Mammary epithelial cell (primary cell): ENCODE measurements at regions of chr7 and their contacts with region 1.

Region 1: GRCh38 chr7:5284304-5285281 is 1.9 kb downstream of the SLC29A4 start:
- DNase-seq: no peak
- H3K4me3 ChIP-seq: no peak overlapping the region
- H3K27ac ChIP-seq: no peak overlapping the region
- H3K4me1 ChIP-seq: no peaks in the 10 kb centered on the region
- H3K27me3 ChIP-seq: no peaks in the 10 kb centered on the region
- CTCF ChIP-seq: peak in 1 of 2 donors; percentile 44

Region 2: DNA sequence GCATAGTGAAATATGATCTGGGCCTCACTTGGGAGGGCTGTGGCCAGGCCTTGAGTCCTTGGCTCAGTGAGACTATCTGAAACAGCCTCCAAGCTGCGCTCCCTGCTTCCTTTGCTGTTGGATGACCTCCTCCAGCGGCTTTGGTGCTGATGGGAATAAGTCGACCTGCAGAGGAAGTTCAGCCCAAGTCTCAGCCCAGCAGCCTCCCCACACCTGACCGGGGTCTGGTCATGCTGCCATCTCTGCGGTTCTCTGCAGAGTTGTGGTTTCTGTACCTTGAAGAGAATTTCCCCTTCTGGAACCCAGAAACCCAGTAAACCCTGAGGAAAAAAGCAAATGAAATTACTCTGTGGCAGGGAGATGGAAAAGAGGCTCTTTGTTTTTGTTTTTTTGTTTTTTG is 243.5 kb before region 1 on chr7:
- CTCF ChIA-PET with region 1: no interaction called
- dilution Hi-C with region 1: no loop called
- in situ Hi-C with region 1: no loop called
- intact Hi-C with region 1: no loop called
- DNase-seq: no peak
- H3K4me3 ChIP-seq: no peak overlapping the region
- H3K27ac ChIP-seq: no peak overlapping the region
- H3K4me1 ChIP-seq: no peaks in the 10 kb centered on the region
- H3K27me3 ChIP-seq: no peaks in the 10 kb centered on the region
- CTCF ChIP-seq: no peak

Region 3: GRCh38 chr7:5117095-5117970 is 167.3 kb before region 1 on chr7:
- CTCF ChIA-PET with region 1: no interaction called
- dilution Hi-C with region 1: no loop called
- in situ Hi-C with region 1: no loop called
- intact Hi-C with region 1: no loop called
- DNase-seq: no peak
- H3K4me3 ChIP-seq: no peak overlapping the region
- H3K27ac ChIP-seq: no peak overlapping the region
- H3K4me1 ChIP-seq: no peaks in the 10 kb centered on the region
- H3K27me3 ChIP-seq: no peaks in the 10 kb centered on the region
- CTCF ChIP-seq: no peak

Region 4: GRCh38 chr7:5231811-5232484 is 52.6 kb before region 1 on chr7:
- CTCF ChIA-PET with region 1: no interaction called
- dilution Hi-C with region 1: loop called (anchors 5 kb)
- in situ Hi-C with region 1: no loop called
- intact Hi-C with region 1: no loop called
- DNase-seq: no peak
- H3K4me3 ChIP-seq: no peak overlapping the region
- H3K27ac ChIP-seq: no peak overlapping the region
- H3K4me1 ChIP-seq: no peaks in the 10 kb centered on the region
- H3K27me3 ChIP-seq: no peaks in the 10 kb centered on the region
- CTCF ChIP-seq: no peak

Region 5: DNA sequence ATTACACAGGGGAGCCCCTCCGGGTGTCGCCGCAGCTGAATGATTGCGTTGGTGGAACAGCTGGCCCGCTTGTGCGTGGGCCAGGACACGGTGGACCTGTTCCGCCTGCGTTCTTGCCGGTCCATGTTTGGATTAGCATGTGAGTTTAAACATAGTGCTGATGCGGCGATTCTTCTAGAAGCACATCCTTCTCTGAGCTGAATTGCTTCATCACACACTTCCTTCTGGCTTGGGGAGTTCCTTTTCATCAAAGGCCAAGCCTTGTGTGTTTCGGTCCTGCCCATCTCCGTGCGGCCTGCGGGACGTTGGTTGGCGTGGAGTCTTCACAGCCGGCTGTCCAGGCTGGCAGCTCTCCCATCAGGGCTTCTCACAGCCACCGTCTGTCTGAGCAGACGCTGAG is 47.3 kb before region 1 on chr7:
- CTCF ChIA-PET with region 1: no interaction called
- dilution Hi-C with region 1: loop called (anchors 5 kb)
- in situ Hi-C with region 1: no loop called
- intact Hi-C with region 1: loop called (anchors 1 kb)
- DNase-seq: peak; percentile 21
- H3K4me3 ChIP-seq: no peak overlapping the region
- H3K27ac ChIP-seq: no peak overlapping the region
- H3K4me1 ChIP-seq: peaks cover 4% of the 10 kb centered on the region
- H3K27me3 ChIP-seq: no peaks in the 10 kb centered on the region
- CTCF ChIP-seq: no peak

Region 6: DNA sequence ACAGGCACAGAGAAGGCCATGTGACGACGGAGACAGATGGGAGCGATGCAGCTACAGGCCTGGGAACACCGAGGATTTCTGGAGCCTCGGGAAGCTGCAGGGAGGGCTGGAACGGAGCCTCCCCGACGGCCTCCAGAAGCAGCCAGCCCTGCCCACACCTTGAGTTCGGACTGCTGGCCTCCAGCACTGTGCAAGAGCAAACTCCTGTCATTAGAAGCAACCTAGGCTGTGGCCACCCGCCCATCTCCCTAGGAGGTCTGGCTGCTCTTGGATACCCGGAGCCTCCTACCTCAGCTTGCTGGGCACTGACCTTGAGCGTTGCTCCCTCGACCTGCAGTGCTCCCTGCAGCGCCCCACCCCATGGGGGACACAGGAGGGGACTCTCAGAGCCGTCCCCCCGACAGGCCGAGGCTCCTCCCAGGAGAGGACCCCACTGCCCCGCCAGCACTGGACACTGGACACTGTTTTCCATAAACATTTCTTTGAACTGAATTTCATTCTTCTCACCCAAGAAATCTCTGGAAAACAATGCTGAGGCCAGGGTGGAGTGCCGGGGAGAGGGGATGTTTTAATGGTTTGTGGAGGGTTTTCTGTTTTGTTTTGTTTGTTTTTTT is 161.5 kb after region 1 on chr7:
- CTCF ChIA-PET with region 1: no interaction called
- dilution Hi-C with region 1: no loop called
- in situ Hi-C with region 1: no loop called
- intact Hi-C with region 1: no loop called
- DNase-seq: no peak
- H3K4me3 ChIP-seq: no peak overlapping the region
- H3K27ac ChIP-seq: no peak overlapping the region
- H3K4me1 ChIP-seq: peaks cover 8% of the 10 kb centered on the region
- H3K27me3 ChIP-seq: no peaks in the 10 kb centered on the region
- CTCF ChIP-seq: no peak